A549 (cell line): ENCODE measurements at regions of chr7 and their contacts with region 1.

Region 1: DNA sequence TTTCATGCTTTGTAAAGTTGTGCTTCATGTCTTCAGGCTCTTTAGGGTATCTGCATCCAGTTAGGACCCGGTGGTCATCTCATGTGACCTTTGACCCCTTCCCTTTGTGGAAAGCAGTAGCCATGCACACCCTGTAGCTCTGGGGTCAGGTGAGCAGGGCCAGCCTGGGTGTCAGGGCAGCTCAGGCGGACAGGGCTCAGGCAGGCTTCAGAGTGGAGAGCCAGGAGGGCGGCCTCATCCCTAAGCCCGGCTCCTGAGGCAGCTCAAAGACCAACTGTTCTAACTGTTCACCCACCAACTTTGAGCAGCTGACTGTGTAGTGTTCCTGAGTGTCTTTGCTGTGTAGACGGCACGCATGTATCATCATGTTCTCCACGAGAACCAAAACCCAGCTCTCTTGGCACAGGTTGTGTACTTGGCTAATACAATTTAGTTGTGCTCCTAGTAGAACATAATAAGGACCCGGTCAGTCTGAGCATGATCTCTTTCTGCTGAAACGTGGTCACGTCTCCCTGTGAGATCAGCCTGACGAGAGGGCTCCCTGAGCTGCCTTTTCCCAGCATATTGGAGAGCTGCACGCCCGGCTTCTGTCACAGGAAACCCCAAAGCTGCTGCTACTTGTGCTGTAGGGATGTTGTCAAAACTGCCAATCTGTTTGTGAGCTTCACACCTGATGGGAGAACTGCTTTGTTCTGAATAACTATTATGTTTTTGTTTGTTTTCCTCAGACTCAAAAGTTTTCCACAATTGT is 30.0 kb downstream of the EEPD1 start:
- DNase-seq: no peak
- ATAC-seq: peak in 1 of 2 experiments; percentile 30; a peak in 1 of 6 replicates
- H3K4me3 ChIP-seq: no peak overlapping the region
- H3K27ac ChIP-seq: no peak overlapping the region
- H3K4me1 ChIP-seq: peaks cover 11% of the 10 kb centered on the region; the same call in 2 of the 3 replicates
- CTCF ChIP-seq: no peak
- EP300 ChIP-seq: no peak
- POLR2A ChIP-seq: no peak
- RAD21 ChIP-seq: no peak

Region 2: GRCh38 chr7:36207451-36208291 is 24.6 kb after region 1 on chr7:
- CTCF ChIA-PET with region 1: interaction called, 11 read pairs
- POLR2A ChIA-PET with region 1: no interaction called
- DNase-seq: peak; percentile 71 to 90
- ATAC-seq: peak; percentile 86 to 92
- H3K4me3 ChIP-seq: no peak overlapping the region
- H3K27ac ChIP-seq: peak overlapping the region; percentile 87 to 88
- H3K4me1 ChIP-seq: peaks cover 80% of the 10 kb centered on the region
- CTCF ChIP-seq: no peak
- EP300 ChIP-seq: peak; percentile 57 to 81; a peak in 3 of 5 replicates
- POLR2A ChIP-seq: no peak
- RAD21 ChIP-seq: peak; percentile 22 to 25; a peak in 2 of 5 replicates

Region 3: GRCh38 chr7:36217961-36218284 is 34.9 kb after region 1 on chr7:
- CTCF ChIA-PET with region 1: no interaction called
- POLR2A ChIA-PET with region 1: no interaction called
- DNase-seq: no peak
- ATAC-seq: no peak
- H3K4me3 ChIP-seq: no peak overlapping the region
- H3K27ac ChIP-seq: no peak overlapping the region
- H3K4me1 ChIP-seq: peaks cover 8% of the 10 kb centered on the region; the same call in 1 of the 3 replicates
- CTCF ChIP-seq: no peak
- EP300 ChIP-seq: no peak
- POLR2A ChIP-seq: no peak
- RAD21 ChIP-seq: no peak